Heart left ventricle (tissue), 16 donors: ENCODE measurements at regions of chr4 and their contacts with region 1.

Region 1: GRCh38 chr4:58411904-58412303 is 1301.7 kb upstream of the IGFBP7 start:
- DNase-seq: no peak
- ATAC-seq: no peak
- H3K4me3 ChIP-seq: no peak overlapping the region
- H3K27ac ChIP-seq: no peak overlapping the region
- H3K4me1 ChIP-seq: no peaks in the 10 kb centered on the region
- H3K27me3 ChIP-seq: no peaks in the 10 kb centered on the region
- CTCF ChIP-seq: no peak
- POLR2A ChIP-seq: no peak

Region 2: DNA sequence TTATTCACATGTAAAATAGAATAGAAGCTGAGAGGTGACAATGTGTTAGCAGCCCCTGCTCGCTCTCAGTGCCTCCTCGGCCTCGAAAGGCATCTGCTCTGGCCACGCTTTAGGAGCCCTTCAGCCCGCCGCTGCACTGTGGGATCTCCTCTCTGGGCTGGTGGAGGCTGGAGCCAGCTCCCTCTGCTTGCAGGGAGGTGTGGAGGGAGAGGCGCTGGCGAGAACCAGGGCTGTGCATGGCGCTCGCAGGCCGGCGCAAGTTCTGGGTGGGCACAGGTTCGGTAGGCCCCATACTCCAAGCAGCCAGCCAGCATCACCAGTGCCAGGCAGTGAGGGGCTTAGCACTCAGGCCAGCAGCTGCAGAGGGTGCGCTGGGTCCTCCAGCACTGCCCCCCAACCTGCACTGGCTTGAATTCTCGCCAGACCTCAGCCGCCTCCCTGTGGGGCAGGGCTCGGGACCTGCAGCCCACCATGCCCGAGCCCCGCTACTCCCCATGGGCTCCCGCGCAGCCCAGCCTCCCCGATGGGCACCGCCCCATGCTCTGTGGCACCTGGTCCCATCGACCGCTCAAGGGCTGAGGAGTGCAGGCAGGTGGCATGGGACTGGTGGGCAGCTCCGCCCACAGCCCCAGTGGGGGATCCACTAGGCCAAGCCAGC is 45.0 kb after region 1 on chr4:
- intact Hi-C with region 1: loop called in 1 of 10 experiments (anchors 5 kb)
- DNase-seq: peak in 1 of 5 donors; percentile 26
- ATAC-seq: peak in 1 of 4 donors; percentile 18
- H3K4me3 ChIP-seq: no peak overlapping the region
- H3K27ac ChIP-seq: no peak overlapping the region
- H3K4me1 ChIP-seq: no peaks in the 10 kb centered on the region
- H3K27me3 ChIP-seq: no peaks in the 10 kb centered on the region
- CTCF ChIP-seq: no peak
- POLR2A ChIP-seq: no peak